Naive thymus-derived CD4-positive, alpha-beta T cell (primary cell): ENCODE measurements at regions of chr12 and their contacts with region 1.

Region 1: DNA sequence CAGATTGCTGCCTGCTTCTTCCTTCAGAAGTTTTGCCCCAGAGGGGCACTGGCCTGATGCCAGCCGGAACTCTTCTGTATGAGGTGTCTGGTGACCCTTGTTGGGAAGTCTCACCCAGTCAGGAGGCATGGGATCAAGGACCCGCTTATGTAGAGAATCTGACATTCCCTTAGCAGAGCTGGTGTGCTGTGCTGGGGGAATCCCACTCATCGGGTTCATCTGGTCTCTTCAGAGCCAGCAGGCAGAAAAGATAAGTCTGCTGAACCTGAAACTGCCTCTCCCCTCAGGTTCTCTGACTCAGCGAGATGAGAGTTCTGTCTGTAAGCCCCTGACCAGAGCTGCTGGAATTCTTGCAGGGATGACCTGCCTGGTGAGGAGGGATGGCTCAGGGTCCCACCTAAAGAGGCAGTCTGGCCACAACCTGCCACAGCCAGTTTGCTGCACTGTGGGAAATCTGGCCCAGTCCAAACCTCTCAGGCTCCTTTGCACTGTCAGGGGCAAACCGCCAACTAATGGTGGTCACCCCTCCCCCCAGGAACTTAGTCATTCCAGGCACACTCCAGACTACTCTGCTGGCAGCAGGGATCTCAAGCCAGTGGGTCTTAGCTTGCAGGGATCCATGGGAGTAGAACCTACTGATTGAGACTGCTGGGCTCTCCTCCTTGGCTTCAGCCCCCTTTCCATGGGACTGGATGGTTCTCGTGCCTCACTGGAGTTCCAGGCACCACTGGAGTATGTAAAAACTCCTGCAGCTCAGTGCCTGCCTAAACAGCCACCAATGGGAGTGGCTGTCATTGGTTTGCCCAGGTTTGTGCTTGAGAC is 4.1 kb downstream of the CLEC2D start:
- DNase-seq: peak in 7 of 9 donors; percentile 36 to 67 (median 45)
- ATAC-seq: peak; percentile 63
- H3K4me3 ChIP-seq: peak overlapping the region; percentile 80
- H3K4me3 Mint-ChIP-seq: peak overlapping the region; percentile 89 to 99 (median 92)
- H3K27ac ChIP-seq: peak overlapping the region; percentile 83
- H3K27ac Mint-ChIP-seq: peak overlapping the region; percentile 90 to 99 (median 95)
- H3K4me1 ChIP-seq: peaks cover 30 to 38% of the 10 kb centered on the region in 2 donors
- H3K4me1 Mint-ChIP-seq: peaks cover 42 to 80% (median 69%) of the 10 kb centered on the region in 7 donors
- H3K27me3 ChIP-seq: no peaks in the 10 kb centered on the region
- H3K27me3 Mint-ChIP-seq: peaks cover 0 to 8% (median 0%) of the 10 kb centered on the region in 5 donors

Region 2: GRCh38 chr12:9597365-9597764 is 76.2 kb before region 1 on chr12:
- CTCF ChIA-PET with region 1: no interaction called
- POLR2A ChIA-PET with region 1: no interaction called
- intact Hi-C with region 1: no loop called
- DNase-seq: no peak
- ATAC-seq: no peak
- H3K4me3 ChIP-seq: no peak overlapping the region
- H3K4me3 Mint-ChIP-seq: no peak overlapping the region
- H3K27ac ChIP-seq: no peak overlapping the region
- H3K27ac Mint-ChIP-seq: no peak overlapping the region
- H3K4me1 ChIP-seq: no peaks in the 10 kb centered on the region
- H3K4me1 Mint-ChIP-seq: peaks cover 0 to 12% (median 0%) of the 10 kb centered on the region in 7 donors
- H3K27me3 ChIP-seq: no peaks in the 10 kb centered on the region
- H3K27me3 Mint-ChIP-seq: peaks cover 0 to 42% (median 0%) of the 10 kb centered on the region in 5 donors

Region 3: GRCh38 chr12:9687228-9687627 is 13.6 kb after region 1 on chr12:
- CTCF ChIA-PET with region 1: no interaction called
- POLR2A ChIA-PET with region 1: interaction called, 686 read pairs
- intact Hi-C with region 1: loop called (anchors 1 to 2 kb)
- DNase-seq: no peak
- ATAC-seq: no peak
- H3K4me3 ChIP-seq: no peak overlapping the region
- H3K4me3 Mint-ChIP-seq: peak overlapping the region in 8 of 10 donors; percentile 21 to 89 (median 34)
- H3K27ac ChIP-seq: peak overlapping the region; percentile 40
- H3K27ac Mint-ChIP-seq: peak overlapping the region in 7 of 9 donors; percentile 5 to 83 (median 67)
- H3K4me1 ChIP-seq: peaks cover 26 to 41% of the 10 kb centered on the region in 2 donors
- H3K4me1 Mint-ChIP-seq: peaks cover 34 to 89% (median 77%) of the 10 kb centered on the region in 7 donors
- H3K27me3 ChIP-seq: no peaks in the 10 kb centered on the region
- H3K27me3 Mint-ChIP-seq: no peaks in the 10 kb centered on the region

Region 4: GRCh38 chr12:9702255-9702654 is 28.6 kb after region 1 on chr12:
- CTCF ChIA-PET with region 1: interaction called, 12 read pairs
- POLR2A ChIA-PET with region 1: interaction called, 51 read pairs
- intact Hi-C with region 1: loop called (anchors 1 to 2 kb)
- DNase-seq: peak in 8 of 9 donors; percentile 44 to 78 (median 70)
- ATAC-seq: peak; percentile 79
- H3K4me3 ChIP-seq: peak overlapping the region; percentile 27
- H3K4me3 Mint-ChIP-seq: peak overlapping the region; percentile 65 to 85 (median 80)
- H3K27ac ChIP-seq: peak overlapping the region; percentile 61
- H3K27ac Mint-ChIP-seq: peak overlapping the region; percentile 83 to 97 (median 94)
- H3K4me1 ChIP-seq: peaks cover 36 to 42% of the 10 kb centered on the region in 2 donors
- H3K4me1 Mint-ChIP-seq: peaks cover 45 to 89% (median 85%) of the 10 kb centered on the region in 7 donors
- H3K27me3 ChIP-seq: no peaks in the 10 kb centered on the region
- H3K27me3 Mint-ChIP-seq: no peaks in the 10 kb centered on the region

Region 5: DNA sequence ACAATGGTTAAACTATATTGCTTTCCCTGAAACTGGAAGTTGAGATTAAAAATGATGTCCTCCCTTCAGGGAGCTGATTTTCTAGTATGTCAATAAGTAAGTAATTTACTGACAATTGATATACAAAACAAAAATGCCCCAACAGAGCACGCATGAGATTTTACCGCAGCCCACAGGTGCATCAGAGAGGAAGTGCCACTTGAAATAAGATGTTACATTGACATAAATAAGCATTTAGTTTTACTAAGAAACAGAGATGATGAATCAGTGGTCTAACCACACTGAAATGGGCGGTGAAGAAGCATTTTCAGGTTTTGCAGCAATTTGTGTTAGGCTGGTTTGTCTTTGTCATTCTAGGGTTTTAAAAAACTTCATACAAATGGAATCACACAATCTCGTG is 68.1 kb after region 1 on chr12:
- CTCF ChIA-PET with region 1: interaction called, 5 read pairs
- POLR2A ChIA-PET with region 1: interaction called, 21 read pairs
- intact Hi-C with region 1: loop called (anchors 1 kb)
- DNase-seq: peak in 8 of 9 donors; percentile 63 to 95 (median 90)
- ATAC-seq: peak; percentile 84
- H3K4me3 ChIP-seq: peak overlapping the region; percentile 15
- H3K4me3 Mint-ChIP-seq: peak overlapping the region; percentile 22 to 95 (median 83)
- H3K27ac ChIP-seq: peak overlapping the region; percentile 76
- H3K27ac Mint-ChIP-seq: peak overlapping the region; percentile 89 to 100 (median 98)
- H3K4me1 ChIP-seq: peaks cover 55 to 59% of the 10 kb centered on the region in 2 donors
- H3K4me1 Mint-ChIP-seq: peaks cover 51 to 81% (median 71%) of the 10 kb centered on the region in 7 donors
- H3K27me3 ChIP-seq: no peaks in the 10 kb centered on the region
- H3K27me3 Mint-ChIP-seq: peaks cover 0 to 6% (median 0%) of the 10 kb centered on the region in 5 donors

Region 6: GRCh38 chr12:10147714-10148403 is 474.2 kb after region 1 on chr12:
- CTCF ChIA-PET with region 1: no interaction called
- POLR2A ChIA-PET with region 1: no interaction called
- intact Hi-C with region 1: no loop called
- DNase-seq: no peak
- ATAC-seq: no peak
- H3K4me3 ChIP-seq: no peak overlapping the region
- H3K4me3 Mint-ChIP-seq: no peak overlapping the region
- H3K27ac ChIP-seq: no peak overlapping the region
- H3K27ac Mint-ChIP-seq: peak overlapping the region in 1 of 9 donors; percentile 28
- H3K4me1 ChIP-seq: no peaks in the 10 kb centered on the region
- H3K4me1 Mint-ChIP-seq: peaks cover 0 to 2% (median under 1%) of the 10 kb centered on the region in 7 donors
- H3K27me3 ChIP-seq: no peaks in the 10 kb centered on the region
- H3K27me3 Mint-ChIP-seq: peaks cover 0 to 52% (median 0%) of the 10 kb centered on the region in 5 donors

Region 7: DNA sequence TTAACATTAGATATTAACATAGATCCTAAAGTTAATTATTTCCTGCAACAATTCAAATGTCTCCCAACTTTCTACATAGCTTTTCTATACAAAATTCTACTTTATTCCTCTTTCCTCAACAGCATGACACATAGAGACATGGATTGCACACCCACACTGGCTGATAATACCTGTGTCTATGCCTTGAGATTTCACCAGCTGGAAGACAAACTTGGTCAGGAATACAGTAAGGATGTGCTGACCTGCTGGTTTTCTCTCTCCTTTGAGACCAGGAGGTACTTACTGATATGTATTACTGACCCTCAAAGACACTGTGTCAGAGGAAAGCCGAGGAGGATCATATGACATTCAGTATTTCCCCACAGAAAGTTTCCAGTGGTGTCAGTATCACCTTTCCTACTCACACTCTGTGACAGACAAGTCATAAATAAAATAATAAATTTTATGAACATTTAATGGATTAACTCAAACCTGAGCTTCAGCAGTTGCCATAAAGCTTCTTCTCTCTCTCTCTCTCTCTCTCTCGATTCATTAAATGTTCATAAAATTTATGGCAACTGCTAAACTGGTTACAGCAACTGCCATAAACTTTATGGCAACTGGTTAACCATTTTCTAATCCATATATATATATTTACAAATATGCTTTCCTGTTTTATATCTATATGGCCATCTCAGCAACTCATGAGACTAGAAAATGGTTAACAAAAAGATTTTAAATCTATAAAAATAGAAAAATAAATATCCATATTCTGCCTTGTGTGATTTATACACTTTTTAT is 854.7 kb after region 1 on chr12:
- CTCF ChIA-PET with region 1: no interaction called
- POLR2A ChIA-PET with region 1: no interaction called
- intact Hi-C with region 1: no loop called
- DNase-seq: no peak
- ATAC-seq: no peak
- H3K4me3 ChIP-seq: no peak overlapping the region
- H3K4me3 Mint-ChIP-seq: no peak overlapping the region
- H3K27ac ChIP-seq: no peak overlapping the region
- H3K27ac Mint-ChIP-seq: no peak overlapping the region
- H3K4me1 ChIP-seq: no peaks in the 10 kb centered on the region
- H3K4me1 Mint-ChIP-seq: no peaks in the 10 kb centered on the region
- H3K27me3 ChIP-seq: no peaks in the 10 kb centered on the region
- H3K27me3 Mint-ChIP-seq: peaks cover 0 to 24% (median 14%) of the 10 kb centered on the region in 5 donors